Activated naive CD4-positive, alpha-beta T cell treated with anti-CD3 and anti-CD28 coated beads for 36 hours (primary cell): ENCODE measurements at regions of chr9 and their contacts with region 1.

Region 1: DNA sequence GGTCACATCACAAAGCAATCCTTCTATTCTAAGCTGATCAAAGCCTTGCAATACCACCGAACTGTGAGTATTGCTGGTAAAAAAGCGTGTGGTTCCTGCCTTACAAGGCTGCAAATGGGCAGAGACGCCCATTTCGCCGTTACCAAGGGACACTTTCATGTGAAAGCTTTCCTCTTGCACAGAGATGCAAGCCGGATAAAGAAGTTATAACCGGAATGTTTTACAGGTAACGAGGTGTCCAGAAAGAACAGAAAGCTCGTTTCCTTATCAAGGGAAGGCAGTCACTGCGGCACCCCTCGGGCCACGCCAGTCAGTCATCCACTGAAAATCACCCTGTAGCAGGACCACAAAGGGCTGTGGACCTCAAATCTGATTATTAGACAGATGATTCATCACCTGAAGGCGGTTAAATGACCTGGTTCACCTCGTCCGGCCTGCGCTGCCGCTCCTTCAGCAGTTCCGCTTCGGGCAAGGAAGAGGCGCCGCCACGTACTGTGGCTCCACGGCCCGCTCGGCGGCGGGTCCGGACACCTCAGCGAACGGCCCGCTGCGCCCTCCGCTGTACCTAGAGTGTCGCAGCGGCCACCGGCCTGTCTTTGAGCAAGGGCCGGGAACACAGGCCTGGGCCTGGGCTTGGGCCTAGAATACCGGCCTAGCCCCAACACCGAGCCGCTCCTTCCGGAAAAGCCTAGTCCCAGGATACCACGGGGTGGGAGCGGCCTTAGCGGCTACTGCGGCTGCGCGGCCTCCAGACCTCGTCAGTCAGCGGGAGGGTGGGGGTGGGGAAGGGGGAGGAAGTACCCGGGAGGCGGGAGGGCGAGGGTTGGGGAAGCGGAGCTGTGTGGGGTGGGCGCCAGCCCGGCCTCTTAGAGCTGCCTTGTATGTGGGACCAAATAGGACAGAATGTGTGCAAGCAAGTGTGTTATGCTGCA is at the start of gene KLHL9:
- DNase-seq: peak; percentile 93
- H3K4me3 Mint-ChIP-seq: peak within 1 kb of the TSS; percentile 84
- H3K27ac Mint-ChIP-seq: peak within 1 kb of the TSS; percentile 91
- H3K4me1 Mint-ChIP-seq: peaks cover 48% of the 10 kb centered on the region
- H3K27me3 Mint-ChIP-seq: no peaks in the 10 kb centered on the region
- total RNA-seq, gene KLHL9: 17.5 to 18.3 TPM

Region 2: GRCh38 chr9:21078717-21079116 is 256.2 kb before region 1 on chr9:
- CTCF ChIA-PET with region 1: no interaction called
- intact Hi-C with region 1: no loop called
- DNase-seq: no peak
- H3K4me3 Mint-ChIP-seq: no peak overlapping the region
- H3K27ac Mint-ChIP-seq: peak overlapping the region; percentile 37
- H3K4me1 Mint-ChIP-seq: peaks cover 27% of the 10 kb centered on the region
- H3K27me3 Mint-ChIP-seq: no peaks in the 10 kb centered on the region

Region 3: DNA sequence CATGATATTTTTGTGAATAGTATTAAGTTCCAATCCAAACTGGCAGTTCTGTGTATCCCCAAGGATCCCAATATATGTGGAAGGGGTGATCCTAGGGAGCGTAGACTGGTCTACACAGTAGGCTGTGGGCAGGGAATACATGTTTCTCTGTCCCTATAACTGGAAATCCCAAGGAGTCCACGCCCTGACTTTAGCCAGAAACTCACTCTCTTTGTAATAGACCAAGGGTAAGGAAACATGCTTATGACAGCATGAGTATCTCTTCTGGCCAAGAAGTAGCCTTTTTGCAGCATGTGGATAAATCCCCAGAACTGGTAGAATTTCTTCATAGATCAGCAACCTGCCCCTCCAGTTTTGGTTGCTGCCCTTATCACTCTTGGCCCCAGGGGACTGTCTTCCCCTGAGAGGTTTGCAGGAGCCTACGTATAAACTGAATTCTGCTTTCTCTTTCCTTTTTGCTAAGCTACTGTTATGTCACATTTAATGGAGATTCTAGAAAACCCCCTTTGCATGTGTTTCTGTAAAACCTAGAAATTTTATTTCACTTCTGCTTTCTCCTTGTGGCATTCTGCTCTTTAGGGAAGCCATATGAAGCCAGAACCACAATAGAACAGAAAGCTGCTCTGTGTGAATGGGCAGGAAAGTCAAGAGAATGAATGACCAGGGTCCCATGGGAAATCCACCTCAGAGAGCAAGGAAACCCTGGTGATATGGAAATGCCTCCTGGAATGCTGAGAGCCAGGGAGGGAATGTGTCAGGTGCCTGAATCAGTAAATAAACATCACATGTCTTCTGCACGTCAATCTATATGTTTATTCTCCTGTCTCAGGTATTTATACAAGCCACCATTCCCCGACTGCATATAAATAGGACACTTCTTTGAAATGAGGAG is 46.7 kb after region 1 on chr9:
- CTCF ChIA-PET with region 1: interaction called, 3 read pairs
- intact Hi-C with region 1: loop called (anchors 1 kb)
- DNase-seq: peak; percentile 17
- H3K4me3 Mint-ChIP-seq: no peak overlapping the region
- H3K27ac Mint-ChIP-seq: no peak overlapping the region
- H3K4me1 Mint-ChIP-seq: peaks cover 14% of the 10 kb centered on the region
- H3K27me3 Mint-ChIP-seq: peaks cover 32% of the 10 kb centered on the region